Posterior cingulate gyrus (tissue), 11 donors: ENCODE measurements at regions of chr13 and their contacts with region 1.

Region 1: GRCh38 chr13:46565808-46566750 is 13.1 kb downstream of the LRCH1 start:
- DNase-seq: no peak

Region 2: GRCh38 chr13:46489586-46490023 is 76.5 kb before region 1 on chr13:
- intact Hi-C with region 1: no loop called
- DNase-seq: no peak

Region 3: GRCh38 chr13:46668302-46668720 is 102.2 kb after region 1 on chr13:
- intact Hi-C with region 1: loop called (anchors 10 kb)
- DNase-seq: peak in 5 of 10 donors; percentile 13 to 83 (median 20)